ENCODE measurements at regions of chr1 and their contacts with region 1.

Region 1: DNA sequence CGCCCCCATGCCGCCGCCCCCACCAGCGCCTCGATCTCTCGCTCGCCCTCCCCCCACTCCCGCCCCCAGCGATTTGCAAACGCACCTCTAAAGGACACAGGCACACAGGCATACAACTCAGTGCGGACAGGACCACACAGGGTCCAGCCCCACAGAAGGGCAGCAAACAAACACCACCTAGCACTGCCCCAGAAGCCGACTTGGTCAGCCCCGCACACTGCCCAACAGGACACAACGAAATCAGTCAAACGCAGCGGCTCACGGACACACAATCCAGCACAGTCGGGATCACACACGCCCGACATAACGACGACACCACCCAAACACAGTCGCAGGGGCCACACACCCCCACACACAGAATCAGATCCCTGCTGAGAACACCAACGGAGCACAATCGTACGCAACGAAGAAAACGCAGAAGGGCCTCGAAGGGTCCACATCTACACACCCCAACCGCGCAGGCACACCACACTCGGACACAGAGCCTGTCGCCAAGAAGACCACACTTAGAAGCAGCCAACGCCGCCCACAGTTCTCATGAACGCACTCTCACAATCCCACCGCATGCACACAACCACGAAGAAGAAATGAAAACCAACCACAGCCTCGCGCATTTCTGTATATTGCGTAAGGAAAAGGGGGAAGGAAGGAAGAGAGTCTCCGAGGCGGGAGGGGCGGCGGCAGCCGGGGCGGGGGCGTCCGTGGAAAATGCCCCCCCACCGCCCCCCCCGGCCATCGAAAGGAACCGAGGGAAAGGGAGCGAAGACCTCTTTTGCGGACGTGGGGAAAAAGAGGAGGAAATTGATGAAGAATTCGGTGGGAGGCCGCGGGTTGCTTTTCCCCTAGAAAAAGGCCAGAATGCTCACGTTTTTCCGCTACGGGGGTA is 481 bp downstream of the TAL1 start:
- DNase-seq: peak; percentile 68 to 82 (median 70)
- H3K4me3 ChIP-seq: peak overlapping the region; percentile 10 to 73 (median 36)
- H3K4me3 Mint-ChIP-seq: peak overlapping the region; percentile 84 to 98
- H3K27ac ChIP-seq: no peak overlapping the region
- H3K27ac Mint-ChIP-seq: peak overlapping the region; percentile 5 to 91 (median 74)
- H3K4me1 ChIP-seq: peaks cover 30 to 31% of the 10 kb centered on the region in 2 donors
- H3K4me1 Mint-ChIP-seq: peaks cover 40% of the 10 kb centered on the region
- H3K27me3 ChIP-seq: peaks cover 77 to 97% of the 10 kb centered on the region in 2 donors
- H3K27me3 Mint-ChIP-seq: peaks cover 88 to 99% (median 98%) of the 10 kb centered on the region in 3 donors
- CTCF ChIP-seq: no peak

Region 2: DNA sequence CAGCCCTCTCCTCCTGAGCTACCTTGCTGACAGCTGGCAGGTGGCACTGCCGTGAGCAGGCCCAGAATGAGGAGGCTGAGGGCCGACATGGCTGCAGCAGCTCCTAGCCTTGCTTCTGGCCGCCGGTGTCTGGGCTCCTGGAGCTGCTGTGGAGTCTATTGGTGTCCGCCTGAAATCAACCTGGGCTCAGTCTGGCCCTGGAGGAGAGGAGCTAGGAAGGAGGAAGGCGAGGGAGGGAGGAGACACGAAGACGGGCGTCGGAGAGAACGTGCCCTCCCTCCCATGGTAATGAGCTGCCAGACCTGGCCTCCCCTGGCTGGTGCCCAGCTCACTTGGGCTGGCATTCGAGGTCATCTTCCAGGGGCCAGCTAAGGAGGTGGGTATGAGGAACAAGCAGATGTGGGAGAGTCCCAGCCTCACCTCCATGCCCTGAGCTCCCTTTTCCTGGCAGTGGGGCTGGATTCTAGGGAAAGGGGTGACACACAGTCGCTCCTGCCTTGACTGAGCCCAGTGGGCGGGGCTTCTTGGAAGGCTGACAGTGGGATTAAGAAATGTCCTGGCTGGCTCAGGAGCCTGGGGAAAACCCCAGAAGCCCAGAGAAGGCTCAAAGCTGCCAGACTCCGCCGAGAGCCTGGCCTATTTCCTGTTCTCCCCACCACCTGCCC is 41.6 kb before region 1 on chr1 and contains the start of gene PDZK1IP1:
- intact Hi-C with region 1: no loop called
- DNase-seq: peak in 1 of 3 donors; percentile 3
- H3K4me3 ChIP-seq: no peak within 1 kb of the TSS
- H3K4me3 Mint-ChIP-seq: no peak within 1 kb of the TSS
- H3K27ac ChIP-seq: no peak within 1 kb of the TSS
- H3K27ac Mint-ChIP-seq: peak within 1 kb of the TSS in 3 of 7 donors; percentile 22 to 54 (median 37)
- H3K4me1 ChIP-seq: no peaks in the 10 kb centered on the region
- H3K4me1 Mint-ChIP-seq: peaks cover 6% of the 10 kb centered on the region
- H3K27me3 ChIP-seq: no peaks in the 10 kb centered on the region
- H3K27me3 Mint-ChIP-seq: peaks cover 0 to 9% (median 6%) of the 10 kb centered on the region in 3 donors
- CTCF ChIP-seq: no peak
- polyA plus RNA-seq, gene PDZK1IP1: 1.4 TPM in 1 of 3 donors, not detected in the others

Region 3: GRCh38 chr1:47432071-47433036 is 200.8 kb after region 1 on chr1:
- intact Hi-C with region 1: loop called in 1 of 2 experiments (anchors 5 kb)
- DNase-seq: peak; percentile 48 to 60 (median 59)
- H3K4me3 ChIP-seq: peak overlapping the region in 2 of 3 experiments; percentile 11 to 68
- H3K4me3 Mint-ChIP-seq: peak overlapping the region; percentile 74 to 87
- H3K27ac ChIP-seq: no peak overlapping the region
- H3K27ac Mint-ChIP-seq: peak overlapping the region in 5 of 7 donors; percentile 13 to 69 (median 30)
- H3K4me1 ChIP-seq: peaks cover 45 to 51% of the 10 kb centered on the region in 2 donors
- H3K4me1 Mint-ChIP-seq: peaks cover 47% of the 10 kb centered on the region
- H3K27me3 ChIP-seq: peaks cover 41 to 52% of the 10 kb centered on the region in 2 donors
- H3K27me3 Mint-ChIP-seq: peaks cover 56 to 65% (median 61%) of the 10 kb centered on the region in 3 donors
- CTCF ChIP-seq: peak; percentile 83